Activated naive CD4-positive, alpha-beta T cell treated with anti-CD3 and anti-CD28 coated beads for 36 hours (primary cell): ENCODE measurements at regions of chr1 and their contacts with region 1.

Region 1: DNA sequence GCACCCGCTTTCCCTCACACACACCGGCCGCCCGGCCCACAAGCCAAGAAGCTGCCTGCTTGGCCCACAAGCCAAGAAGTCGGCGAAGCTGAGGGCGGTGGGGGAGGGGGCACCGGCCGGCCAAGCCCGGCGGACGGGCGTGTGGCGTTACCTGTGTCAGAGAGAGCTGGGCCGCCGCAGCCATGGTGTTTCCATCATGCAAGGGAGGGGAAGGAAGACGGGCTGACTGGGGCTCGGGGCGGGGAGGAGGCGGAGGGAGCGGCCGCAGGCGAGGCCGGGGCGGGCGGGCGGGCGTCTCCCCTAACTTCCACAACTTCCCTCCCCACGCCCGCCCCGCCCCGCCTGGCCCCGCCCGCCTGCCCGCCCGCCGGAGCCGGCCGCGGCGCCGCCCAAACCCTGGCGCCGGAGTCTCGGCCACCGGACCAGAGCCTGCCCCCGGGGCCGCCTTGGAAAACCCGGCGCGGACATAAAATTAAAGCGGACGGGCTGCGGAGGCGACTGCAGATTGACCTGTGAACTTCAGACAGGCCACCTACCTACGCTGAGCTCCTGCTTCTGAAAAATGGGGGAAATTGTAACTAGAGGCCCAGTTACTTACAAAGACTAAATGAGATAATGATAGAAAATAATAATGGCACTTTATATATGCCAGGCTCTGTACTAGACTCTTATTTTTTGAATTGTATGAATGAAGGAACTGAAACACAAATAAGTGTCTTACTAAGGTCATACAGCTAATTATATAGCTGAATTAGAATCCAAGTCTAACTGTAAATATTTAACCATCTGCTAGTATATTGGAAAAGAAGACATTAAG is at the start of gene EPS15:
- DNase-seq: peak; percentile 89
- H3K4me3 Mint-ChIP-seq: peak within 1 kb of the TSS; percentile 87
- H3K27ac Mint-ChIP-seq: peak within 1 kb of the TSS; percentile 84
- H3K4me1 Mint-ChIP-seq: peaks cover 47% of the 10 kb centered on the region
- H3K27me3 Mint-ChIP-seq: no peaks in the 10 kb centered on the region
- total RNA-seq, gene EPS15: 56.0 to 57.0 TPM

Region 2: DNA sequence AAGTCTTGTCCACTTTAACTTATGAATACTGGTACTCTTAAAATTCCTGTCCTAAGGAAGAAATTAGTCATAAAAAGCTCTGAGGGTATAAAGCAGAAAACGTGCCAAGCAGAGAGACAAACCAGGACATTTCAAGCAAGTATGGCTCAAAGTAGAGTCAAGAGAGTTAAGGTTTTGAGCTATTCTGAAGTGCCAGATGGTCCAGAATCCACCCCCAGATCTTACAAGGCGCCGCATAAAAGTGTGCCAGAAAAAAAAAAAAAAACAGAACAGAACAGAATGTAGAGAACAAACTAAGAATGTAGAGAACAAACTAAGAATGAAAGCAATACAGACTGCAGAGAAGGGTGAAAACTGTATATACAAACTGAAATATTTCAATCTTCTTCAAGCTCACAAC is 12.7 kb before region 1 on chr1:
- CTCF ChIA-PET with region 1: interaction called, 3 read pairs
- intact Hi-C with region 1: loop called (anchors 1 kb)
- DNase-seq: no peak
- H3K4me3 Mint-ChIP-seq: no peak overlapping the region
- H3K27ac Mint-ChIP-seq: no peak overlapping the region
- H3K4me1 Mint-ChIP-seq: peaks cover 52% of the 10 kb centered on the region
- H3K27me3 Mint-ChIP-seq: no peaks in the 10 kb centered on the region

Region 3: DNA sequence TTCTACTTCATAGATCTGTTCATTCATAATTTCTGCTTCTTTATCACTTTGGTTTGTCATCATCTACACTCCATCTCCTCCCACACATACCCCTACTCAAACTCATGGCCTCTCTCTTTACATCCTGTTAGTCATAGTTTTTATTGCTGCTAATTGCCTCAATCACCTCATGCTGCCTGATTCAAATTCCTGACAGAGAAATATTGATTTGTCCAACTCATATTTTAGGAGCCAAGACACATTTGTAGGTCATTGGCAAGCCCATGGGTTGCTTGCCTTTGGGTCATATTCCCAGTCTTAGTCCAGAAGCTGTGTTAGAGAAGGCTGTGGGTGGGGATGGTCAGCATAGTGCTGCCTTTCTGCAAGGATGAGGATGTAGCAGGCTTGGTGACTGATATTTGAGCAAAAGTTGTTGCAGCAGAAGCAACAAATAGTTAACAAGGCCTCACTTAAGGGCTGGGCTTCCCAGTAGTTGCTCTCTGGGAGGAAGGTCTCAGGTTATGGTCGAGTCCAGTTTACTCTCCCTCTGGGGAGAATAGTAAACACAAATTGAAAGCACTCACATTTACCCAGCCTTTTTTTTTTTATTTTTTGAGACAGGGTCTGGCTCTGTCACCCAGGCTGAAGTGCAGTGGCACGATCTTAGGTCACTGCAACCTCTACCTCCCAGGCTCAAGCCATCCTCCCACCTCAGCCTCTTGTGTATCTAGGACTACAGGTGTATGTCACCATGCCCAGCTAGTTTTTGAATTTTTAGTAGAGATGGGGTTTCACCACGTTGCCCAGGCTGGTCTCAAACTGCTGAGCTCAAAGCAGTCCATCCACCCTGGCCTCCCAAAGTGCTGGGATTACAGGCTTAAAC is 22.3 kb after region 1 on chr1:
- CTCF ChIA-PET with region 1: no interaction called
- intact Hi-C with region 1: loop called (anchors 2 kb)
- DNase-seq: peak; percentile 26
- H3K4me3 Mint-ChIP-seq: no peak overlapping the region
- H3K27ac Mint-ChIP-seq: no peak overlapping the region
- H3K4me1 Mint-ChIP-seq: peaks cover 17% of the 10 kb centered on the region
- H3K27me3 Mint-ChIP-seq: no peaks in the 10 kb centered on the region

Region 4: DNA sequence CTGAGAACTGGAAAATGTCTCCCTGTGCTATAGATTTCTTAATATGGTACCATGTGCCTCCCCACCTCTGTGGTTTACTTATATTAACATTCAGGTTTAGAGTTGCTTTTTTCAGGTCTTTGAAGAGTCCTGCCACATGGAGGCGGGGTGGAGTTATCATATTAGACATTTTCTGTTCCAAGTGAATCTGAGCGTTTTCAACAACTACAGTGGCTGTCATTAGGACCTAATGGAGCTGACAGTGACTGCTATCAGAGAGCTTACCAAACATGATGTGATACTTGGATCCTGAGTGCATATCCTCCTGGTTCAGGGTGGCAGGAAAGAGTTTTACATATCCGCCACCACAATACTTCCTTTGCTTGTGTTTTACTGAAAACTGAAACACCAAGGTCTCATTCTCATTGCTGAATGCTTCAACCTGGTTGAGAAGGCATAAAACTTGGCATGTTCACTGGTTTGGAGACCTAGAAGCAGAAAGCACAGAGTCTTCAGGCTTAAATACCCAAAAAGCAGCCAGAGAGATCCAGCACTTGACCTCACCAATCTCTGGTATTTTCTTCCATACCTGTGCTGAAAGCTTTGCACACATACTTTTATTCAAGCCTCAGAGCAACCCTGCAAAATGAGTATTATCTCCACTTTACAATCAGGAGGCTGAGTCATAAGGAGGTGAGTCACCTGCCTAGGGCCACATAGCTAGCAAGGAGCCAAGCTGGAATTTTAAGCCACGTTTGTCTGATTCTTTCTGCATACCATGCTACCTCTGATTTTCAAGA is 50.2 kb after region 1 on chr1:
- CTCF ChIA-PET with region 1: no interaction called
- intact Hi-C with region 1: loop called (anchors 1 kb)
- DNase-seq: peak; percentile 68
- H3K4me3 Mint-ChIP-seq: peak overlapping the region; percentile 13
- H3K27ac Mint-ChIP-seq: peak overlapping the region; percentile 91
- H3K4me1 Mint-ChIP-seq: peaks cover 31% of the 10 kb centered on the region
- H3K27me3 Mint-ChIP-seq: no peaks in the 10 kb centered on the region

Region 5: DNA sequence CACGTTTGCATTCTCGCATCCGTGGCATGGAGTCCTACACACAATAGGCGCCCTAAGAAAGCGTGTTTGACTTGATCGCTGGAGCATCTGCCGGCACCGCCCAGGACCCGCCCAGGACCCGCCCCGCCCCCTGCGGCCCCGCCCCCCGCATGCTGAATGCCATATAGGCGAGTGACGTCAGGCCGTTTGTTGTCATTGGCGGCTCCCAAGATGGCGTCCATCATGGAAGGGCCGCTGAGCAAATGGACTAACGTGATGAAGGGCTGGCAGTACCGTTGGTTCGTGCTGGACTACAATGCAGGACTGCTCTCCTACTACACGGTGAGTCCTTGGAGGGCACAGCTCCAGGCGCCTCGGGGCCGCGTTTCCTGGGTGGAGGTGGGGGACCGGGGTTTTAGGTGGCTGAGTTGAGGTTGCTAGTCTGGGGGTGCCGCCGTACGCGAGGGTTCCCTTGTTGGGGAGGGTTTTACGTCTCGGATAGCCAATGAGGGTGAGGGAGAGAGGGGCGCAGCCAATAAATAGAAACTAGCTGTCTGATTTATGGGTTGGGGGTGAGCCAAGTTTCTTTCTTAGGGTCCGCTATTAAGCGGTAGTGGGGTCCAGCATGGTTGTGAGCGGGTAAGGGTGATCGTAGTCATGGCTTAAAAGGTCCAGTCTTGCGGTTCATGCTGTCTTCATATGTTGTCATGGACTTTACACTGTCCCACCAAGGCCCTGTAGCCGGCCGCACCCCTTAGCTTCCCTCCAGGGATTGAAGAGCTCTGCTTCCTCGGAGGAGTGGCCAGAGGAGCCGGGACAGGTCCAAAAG is 97.8 kb after region 1 on chr1 and contains the start of gene OSBPL9:
- CTCF ChIA-PET with region 1: no interaction called
- intact Hi-C with region 1: loop called (anchors 1 kb)
- DNase-seq: peak; percentile 94
- H3K4me3 Mint-ChIP-seq: peak within 1 kb of the TSS; percentile 98
- H3K27ac Mint-ChIP-seq: peak within 1 kb of the TSS; percentile 89
- H3K4me1 Mint-ChIP-seq: peaks cover 25% of the 10 kb centered on the region
- H3K27me3 Mint-ChIP-seq: no peaks in the 10 kb centered on the region
- total RNA-seq, gene OSBPL9: 38.2 to 40.7 TPM

Region 6: DNA sequence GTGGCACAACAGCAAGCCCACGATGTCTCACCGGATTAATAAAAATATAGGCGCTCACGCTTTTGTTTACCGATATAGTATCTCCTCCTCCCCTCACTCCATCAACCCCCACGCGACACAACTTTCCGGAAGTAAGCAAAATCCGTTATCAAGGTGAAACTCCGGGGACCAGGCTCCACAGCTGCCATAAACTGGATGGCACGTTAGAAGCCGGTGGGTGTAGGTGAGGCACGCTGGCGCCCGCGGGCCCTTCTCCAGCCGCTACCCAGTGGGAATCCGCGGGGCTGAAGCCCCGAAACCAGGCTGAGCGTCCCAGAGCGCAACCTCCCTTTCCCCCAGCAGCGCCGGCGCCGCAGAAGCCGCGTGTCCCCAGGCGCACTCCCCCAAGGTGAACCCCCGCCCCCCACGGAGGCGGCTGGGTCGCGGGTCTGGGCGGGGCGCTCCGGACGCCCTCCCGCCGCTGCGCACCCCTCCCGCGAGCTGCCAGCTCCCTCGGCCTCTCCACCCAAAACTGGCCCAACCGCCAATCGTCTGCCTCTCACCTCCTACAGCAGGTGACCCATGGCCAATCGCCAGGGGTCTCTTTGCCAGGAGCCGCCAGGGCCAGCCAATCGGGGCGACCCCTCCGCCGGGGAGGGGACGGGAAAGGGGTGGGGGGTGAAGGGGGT is 210.0 kb after region 1 on chr1:
- CTCF ChIA-PET with region 1: interaction called, 3 read pairs
- intact Hi-C with region 1: loop called (anchors 1 kb)
- DNase-seq: peak; percentile 97
- H3K4me3 Mint-ChIP-seq: peak overlapping the region; percentile 87
- H3K27ac Mint-ChIP-seq: peak overlapping the region; percentile 87
- H3K4me1 Mint-ChIP-seq: peaks cover 33% of the 10 kb centered on the region
- H3K27me3 Mint-ChIP-seq: no peaks in the 10 kb centered on the region